ENCODE measurements at regions of chr2 and their contacts with region 1.

Region 1: DNA sequence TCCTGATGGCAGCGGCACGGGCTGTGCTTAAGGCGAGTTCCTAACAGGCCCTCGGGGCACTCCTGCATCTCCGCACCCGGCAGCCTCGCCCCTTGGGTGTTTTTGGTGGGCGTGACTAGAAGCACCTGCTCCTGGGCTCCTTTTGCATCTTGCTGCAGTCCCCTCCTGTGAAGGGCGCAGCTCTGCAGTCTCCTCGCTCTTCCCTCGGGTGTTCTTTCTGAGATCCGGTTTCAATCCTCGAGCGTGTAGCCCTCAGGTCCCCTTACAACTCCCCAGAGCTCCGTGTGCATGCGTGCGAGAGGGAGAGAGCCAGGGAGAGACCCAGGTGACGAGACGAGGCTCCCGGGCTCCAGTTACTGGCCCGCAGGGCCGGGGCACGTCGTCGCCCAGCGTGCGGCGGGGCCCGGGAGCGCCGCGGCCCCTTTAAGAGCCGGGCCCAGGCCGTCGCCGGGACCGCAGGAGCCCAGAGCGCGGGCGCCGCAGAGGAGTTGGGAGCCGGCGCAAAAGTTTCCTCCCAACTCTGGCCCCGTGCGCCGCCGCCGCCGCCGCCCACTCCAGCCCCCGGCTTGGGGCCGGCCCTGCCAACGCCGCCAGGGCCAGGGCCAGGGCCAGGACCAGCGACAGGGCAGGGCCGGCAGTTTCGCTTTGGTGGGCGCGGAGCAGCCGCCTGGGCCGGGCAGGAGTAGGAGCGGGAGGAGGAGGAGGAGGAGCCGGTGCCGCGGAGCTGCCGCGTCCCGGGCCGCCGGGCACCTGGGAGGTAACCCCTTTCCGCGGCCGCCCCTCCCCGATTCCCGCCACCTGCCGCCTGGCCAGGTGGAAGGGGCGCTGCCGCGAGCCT is at the start of gene PARD3B:
- DNase-seq: peak; percentile 66
- H3K4me3 Mint-ChIP-seq: peak within 1 kb of the TSS; percentile 88
- H3K27ac Mint-ChIP-seq: peak within 1 kb of the TSS; percentile 88
- H3K4me1 Mint-ChIP-seq: peaks cover 8% of the 10 kb centered on the region
- H3K27me3 Mint-ChIP-seq: no peaks in the 10 kb centered on the region
- CTCF ChIP-seq: no peak
- total RNA-seq, gene PARD3B: 8.4 and 11.6 TPM in 2 replicates

Region 2: GRCh38 chr2:204452464-204453023 is 92.7 kb before region 1 on chr2:
- CTCF ChIA-PET with region 1: no interaction called
- POLR2A ChIA-PET with region 1: no interaction called
- intact Hi-C with region 1: loop called (anchors 5 kb)
- DNase-seq: peak; percentile 85
- H3K4me3 Mint-ChIP-seq: no peak overlapping the region
- H3K27ac Mint-ChIP-seq: peak overlapping the region; percentile 88
- H3K4me1 Mint-ChIP-seq: peaks cover 7% of the 10 kb centered on the region
- H3K27me3 Mint-ChIP-seq: no peaks in the 10 kb centered on the region
- CTCF ChIP-seq: no peak

Region 3: DNA sequence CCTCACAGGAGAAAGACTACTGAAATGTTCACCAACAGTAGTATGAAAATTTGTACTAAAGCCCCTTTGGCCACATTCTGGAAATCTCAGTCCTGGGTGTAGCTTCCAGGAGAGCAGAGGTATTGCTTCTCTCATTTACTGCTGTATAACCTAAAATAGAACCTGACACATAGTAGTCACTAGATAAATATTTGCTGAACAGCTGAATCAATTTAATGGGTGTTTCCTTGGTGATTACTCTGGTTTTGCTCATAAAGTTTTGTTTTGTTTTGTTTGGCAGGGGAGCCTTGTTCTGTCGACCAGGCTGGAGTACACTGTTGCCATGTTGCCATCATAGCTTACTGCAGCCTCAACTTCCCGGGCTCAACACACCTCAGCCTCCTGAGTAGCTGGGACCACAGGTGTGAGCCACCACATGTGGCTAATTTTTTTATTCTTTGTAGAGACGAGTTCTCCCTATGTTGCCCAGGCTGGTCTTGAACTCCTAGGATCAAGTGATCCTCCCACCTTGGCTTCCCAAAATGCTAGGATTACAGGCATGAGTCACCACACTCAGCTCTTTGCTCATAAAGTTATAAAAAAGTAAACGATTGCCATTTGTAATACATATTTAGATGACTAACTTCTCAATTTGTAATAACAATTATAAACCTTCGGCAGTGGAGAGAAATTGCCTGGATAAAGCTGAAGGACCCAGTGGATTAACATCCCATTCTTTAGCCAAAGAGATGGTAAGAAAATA is 11.4 kb before region 1 on chr2:
- CTCF ChIA-PET with region 1: interaction called, 5 read pairs
- POLR2A ChIA-PET with region 1: interaction called, 20 read pairs
- intact Hi-C with region 1: no loop called
- DNase-seq: peak; percentile 45
- H3K4me3 Mint-ChIP-seq: no peak overlapping the region
- H3K27ac Mint-ChIP-seq: no peak overlapping the region
- H3K4me1 Mint-ChIP-seq: peaks cover 5% of the 10 kb centered on the region
- H3K27me3 Mint-ChIP-seq: no peaks in the 10 kb centered on the region
- CTCF ChIP-seq: no peak

Region 4: GRCh38 chr2:205372141-205372540 is 826.9 kb after region 1 on chr2:
- CTCF ChIA-PET with region 1: no interaction called
- POLR2A ChIA-PET with region 1: no interaction called
- intact Hi-C with region 1: no loop called
- DNase-seq: no peak
- H3K4me3 Mint-ChIP-seq: no peak overlapping the region
- H3K27ac Mint-ChIP-seq: no peak overlapping the region
- H3K4me1 Mint-ChIP-seq: no peaks in the 10 kb centered on the region
- H3K27me3 Mint-ChIP-seq: no peaks in the 10 kb centered on the region
- CTCF ChIP-seq: no peak